ENCODE measurements at regions of chr5 and their contacts with region 1.

Region 1: DNA sequence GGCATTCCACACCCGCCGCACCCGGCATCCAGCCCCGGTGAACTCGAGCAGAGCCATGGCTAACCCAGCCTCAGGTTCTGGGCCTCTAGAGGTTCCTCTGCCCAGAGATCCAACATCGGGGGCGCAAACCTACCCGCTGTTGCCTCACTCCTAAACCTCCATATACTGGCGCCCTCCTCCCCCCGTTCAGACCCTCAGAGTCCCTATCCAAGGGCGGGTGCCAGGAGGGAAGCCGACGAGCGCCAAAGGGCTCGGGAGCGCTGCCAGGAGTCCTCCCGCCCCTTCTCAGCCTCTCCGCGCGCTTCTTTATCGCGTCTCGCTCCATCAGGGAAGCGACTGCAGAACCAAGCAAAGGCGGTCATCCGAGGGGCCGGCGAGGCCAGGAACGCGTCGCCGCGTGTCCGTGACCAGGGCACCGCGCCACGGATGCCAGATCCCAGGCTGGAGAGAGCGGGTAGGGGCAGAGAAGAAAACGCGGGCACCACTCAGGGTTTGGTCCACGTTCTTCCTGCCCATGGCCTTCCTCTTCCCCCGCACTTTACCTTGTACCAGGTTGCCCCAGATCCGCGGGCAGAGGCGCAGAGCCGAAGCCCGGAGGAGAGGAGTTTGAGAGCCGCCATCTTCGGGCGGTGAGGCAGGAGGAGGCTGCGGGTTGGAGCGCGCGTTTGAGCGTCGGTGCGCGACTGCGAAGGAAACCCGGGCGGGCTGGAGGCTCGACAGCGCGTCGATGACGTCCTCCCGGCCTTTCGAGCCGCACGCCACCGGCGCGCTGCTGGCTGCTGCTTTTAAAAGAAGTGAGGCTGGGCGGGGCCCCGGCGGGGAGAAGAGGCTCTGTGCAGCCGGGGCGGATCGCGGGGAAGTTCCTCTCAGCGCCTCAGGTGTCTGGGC is at the start of gene OXCT1:
- DNase-seq: peak; percentile 78
- H3K4me3 ChIP-seq: peak within 1 kb of the TSS; percentile 49 to 74
- H3K27ac ChIP-seq: peak within 1 kb of the TSS; percentile 89 to 93
- H3K4me1 ChIP-seq: peaks cover 6% of the 10 kb centered on the region
- H3K27me3 ChIP-seq: no peaks in the 10 kb centered on the region
- CTCF ChIP-seq: no peak
- POLR2A ChIP-seq: peak; percentile 61
- total RNA-seq, gene OXCT1: 15.2 to 25.3 TPM

Region 2: DNA sequence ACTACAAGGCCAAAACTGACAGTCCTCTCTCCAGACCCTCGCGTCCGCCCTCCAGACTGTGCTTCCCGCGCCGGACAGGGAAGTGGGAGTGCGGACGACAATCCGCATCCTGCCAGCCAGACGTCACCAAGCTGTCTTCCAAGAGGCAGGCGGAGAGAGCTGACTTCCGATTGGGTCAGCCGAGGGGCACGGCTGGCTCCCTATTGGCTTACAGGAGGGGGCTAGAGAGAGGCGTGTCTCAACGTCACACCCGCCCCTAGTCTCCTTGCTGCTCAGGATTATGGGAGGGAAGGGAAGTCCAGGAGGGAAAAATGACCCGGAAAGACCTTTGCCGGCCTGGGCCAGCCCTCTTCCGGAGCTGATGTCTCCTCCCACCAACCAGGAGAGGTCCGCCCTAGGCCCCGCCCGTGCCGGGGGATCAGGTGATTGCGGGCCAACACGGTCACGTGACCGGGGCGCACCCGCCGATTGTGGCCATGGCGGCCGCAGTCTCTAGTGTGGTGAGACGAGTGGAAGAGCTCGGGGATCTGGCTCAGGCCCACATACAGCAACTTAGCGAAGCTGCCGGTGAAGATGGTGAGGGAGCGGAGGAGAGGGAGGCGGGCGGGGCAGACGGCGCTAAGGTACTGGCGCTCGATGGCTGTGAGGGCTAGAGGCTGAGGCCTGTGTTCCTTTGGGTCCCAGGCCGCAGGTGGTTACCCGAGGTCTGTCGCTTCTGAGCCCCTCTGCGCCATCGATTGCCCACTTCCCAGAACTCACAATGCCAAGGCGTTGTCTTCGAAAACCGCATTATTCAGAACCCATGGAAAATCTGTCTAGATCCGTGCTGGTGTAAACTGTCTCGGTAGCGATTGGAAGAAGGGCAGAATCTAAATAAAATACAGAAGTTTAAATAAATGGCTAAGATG is 34.2 kb after region 1 on chr5 and contains the start of gene RIMOC1:
- intact Hi-C with region 1: loop called (anchors 1 kb)
- DNase-seq: peak; percentile 99
- H3K4me3 ChIP-seq: peak within 1 kb of the TSS; percentile 57 to 74
- H3K27ac ChIP-seq: peak within 1 kb of the TSS; percentile 90
- H3K4me1 ChIP-seq: peaks cover 2% of the 10 kb centered on the region
- H3K27me3 ChIP-seq: no peaks in the 10 kb centered on the region
- CTCF ChIP-seq: peak in 1 of 4 experiments; percentile 12
- POLR2A ChIP-seq: peak; percentile 71
- total RNA-seq, gene RIMOC1: 18.1 to 20.5 TPM

Region 3: GRCh38 chr5:42035526-42035925 is 165.5 kb after region 1 on chr5:
- intact Hi-C with region 1: no loop called
- DNase-seq: no peak
- H3K4me3 ChIP-seq: no peak overlapping the region
- H3K27ac ChIP-seq: no peak overlapping the region
- H3K4me1 ChIP-seq: no peaks in the 10 kb centered on the region
- H3K27me3 ChIP-seq: no peaks in the 10 kb centered on the region
- CTCF ChIP-seq: no peak
- POLR2A ChIP-seq: no peak

Region 4: GRCh38 chr5:42767491-42768105 is 897.6 kb after region 1 on chr5:
- intact Hi-C with region 1: loop called (anchors 5 kb)
- DNase-seq: no peak
- H3K4me3 ChIP-seq: no peak overlapping the region
- H3K27ac ChIP-seq: no peak overlapping the region
- H3K4me1 ChIP-seq: no peaks in the 10 kb centered on the region
- H3K27me3 ChIP-seq: no peaks in the 10 kb centered on the region
- CTCF ChIP-seq: peak; percentile 13 to 69 (median 53)
- POLR2A ChIP-seq: no peak